PC-3 (cell line): ENCODE measurements at regions of chr11 and their contacts with region 1.

Region 1: DNA sequence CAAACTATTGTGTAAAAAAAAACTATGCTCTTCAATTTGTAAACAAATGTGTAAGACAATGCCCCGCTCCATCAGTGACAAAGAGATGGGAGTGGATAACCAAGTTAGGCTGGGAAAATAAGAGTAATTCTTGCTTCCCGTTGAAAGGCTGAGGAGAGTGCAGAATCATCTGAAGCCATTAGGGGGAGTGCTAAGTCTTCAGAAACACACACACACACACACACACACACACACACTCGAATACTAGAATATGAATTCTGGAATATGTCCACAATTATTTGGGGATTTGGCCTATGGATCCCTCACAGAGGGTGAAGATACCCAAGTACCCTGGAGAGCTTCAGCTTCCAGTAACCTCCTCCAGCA is 27.8 kb upstream of the ROBO3 start:
- DNase-seq: peak; percentile 93
- ATAC-seq: peak; percentile 21
- H3K4me3 ChIP-seq: peak overlapping the region; percentile 20
- H3K27ac ChIP-seq: no peak overlapping the region
- H3K4me1 ChIP-seq: peaks cover 58% of the 10 kb centered on the region
- H3K27me3 ChIP-seq: peaks cover 36% of the 10 kb centered on the region
- CTCF ChIP-seq: peak; percentile 69

Region 2: DNA sequence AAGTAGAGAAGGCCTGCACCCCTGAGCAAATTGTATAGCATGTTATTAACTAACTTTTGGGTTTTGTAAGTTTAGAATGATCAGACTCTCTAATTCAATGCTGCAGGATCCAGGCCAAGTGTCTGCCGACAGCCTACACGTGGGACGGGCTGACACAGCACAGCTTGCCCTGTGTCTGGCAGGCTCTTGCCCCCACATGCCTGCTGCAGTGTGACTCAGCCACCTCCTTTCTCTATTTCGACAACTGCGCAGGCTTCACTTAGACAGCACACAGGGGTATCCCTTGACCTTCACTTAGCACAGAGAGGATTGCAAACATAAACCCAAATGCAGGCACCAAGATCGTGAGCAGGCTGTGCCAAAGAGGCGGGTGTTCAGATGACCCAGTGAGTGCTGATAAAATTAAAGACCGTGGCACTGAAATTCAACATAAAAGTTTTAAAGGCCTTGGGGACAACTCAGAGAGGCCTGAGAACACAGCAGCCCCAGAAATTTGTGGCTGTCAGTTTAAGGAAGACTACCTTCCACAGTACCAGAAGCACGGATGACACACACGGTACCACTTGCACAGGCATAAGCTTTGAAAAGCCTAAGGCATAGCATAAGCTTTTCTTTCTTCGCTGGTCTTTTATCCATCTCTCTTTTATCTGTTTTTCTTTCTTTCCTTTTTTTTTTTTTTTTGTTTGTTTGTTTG is 1220.8 kb before region 1 on chr11:
- CTCF ChIA-PET with region 1: interaction called, 10 read pairs
- POLR2A ChIA-PET with region 1: no interaction called
- intact Hi-C with region 1: no loop called
- DNase-seq: no peak
- ATAC-seq: no peak
- H3K4me3 ChIP-seq: no peak overlapping the region
- H3K27ac ChIP-seq: no peak overlapping the region
- H3K4me1 ChIP-seq: no peaks in the 10 kb centered on the region
- H3K27me3 ChIP-seq: no peaks in the 10 kb centered on the region
- CTCF ChIP-seq: no peak

Region 3: GRCh38 chr11:124673333-124674167 is 163.9 kb before region 1 on chr11 and contains the starts of genes SIAE and SPA17:
- CTCF ChIA-PET with region 1: interaction called, 23 read pairs
- POLR2A ChIA-PET with region 1: interaction called, 17 read pairs
- intact Hi-C with region 1: loop called (anchors 1 kb)
- DNase-seq: peak; percentile 94
- ATAC-seq: peak; percentile 94
- H3K4me3 ChIP-seq: peak within 1 kb of the TSS; percentile 91
- H3K27ac ChIP-seq: peak within 1 kb of the TSS; percentile 46
- H3K4me1 ChIP-seq: peaks cover 16% of the 10 kb centered on the region
- H3K27me3 ChIP-seq: no peaks in the 10 kb centered on the region
- CTCF ChIP-seq: no peak
- total RNA-seq, gene SIAE: 12.8 and 17.6 TPM in 2 replicates
- total RNA-seq, gene SPA17: 14.0 and 16.5 TPM in 2 replicates

Region 4: GRCh38 chr11:124763156-124763947 is 74.1 kb before region 1 on chr11:
- CTCF ChIA-PET with region 1: interaction called, 50 read pairs
- POLR2A ChIA-PET with region 1: interaction called, 3 read pairs
- intact Hi-C with region 1: loop called (anchors 1 kb)
- DNase-seq: peak; percentile 90
- ATAC-seq: peak; percentile 63
- H3K4me3 ChIP-seq: peak overlapping the region; percentile 91
- H3K27ac ChIP-seq: no peak overlapping the region
- H3K4me1 ChIP-seq: peaks cover 22% of the 10 kb centered on the region
- H3K27me3 ChIP-seq: no peaks in the 10 kb centered on the region
- CTCF ChIP-seq: peak; percentile 89

Region 5: GRCh38 chr11:124793466-124794278 is 43.8 kb before region 1 on chr11:
- CTCF ChIA-PET with region 1: interaction called, 48 read pairs
- POLR2A ChIA-PET with region 1: no interaction called
- intact Hi-C with region 1: no loop called
- DNase-seq: peak; percentile 82
- ATAC-seq: peak; percentile 65
- H3K4me3 ChIP-seq: no peak overlapping the region
- H3K27ac ChIP-seq: no peak overlapping the region
- H3K4me1 ChIP-seq: peaks cover 42% of the 10 kb centered on the region
- H3K27me3 ChIP-seq: no peaks in the 10 kb centered on the region
- CTCF ChIP-seq: peak; percentile 88

Region 6: DNA sequence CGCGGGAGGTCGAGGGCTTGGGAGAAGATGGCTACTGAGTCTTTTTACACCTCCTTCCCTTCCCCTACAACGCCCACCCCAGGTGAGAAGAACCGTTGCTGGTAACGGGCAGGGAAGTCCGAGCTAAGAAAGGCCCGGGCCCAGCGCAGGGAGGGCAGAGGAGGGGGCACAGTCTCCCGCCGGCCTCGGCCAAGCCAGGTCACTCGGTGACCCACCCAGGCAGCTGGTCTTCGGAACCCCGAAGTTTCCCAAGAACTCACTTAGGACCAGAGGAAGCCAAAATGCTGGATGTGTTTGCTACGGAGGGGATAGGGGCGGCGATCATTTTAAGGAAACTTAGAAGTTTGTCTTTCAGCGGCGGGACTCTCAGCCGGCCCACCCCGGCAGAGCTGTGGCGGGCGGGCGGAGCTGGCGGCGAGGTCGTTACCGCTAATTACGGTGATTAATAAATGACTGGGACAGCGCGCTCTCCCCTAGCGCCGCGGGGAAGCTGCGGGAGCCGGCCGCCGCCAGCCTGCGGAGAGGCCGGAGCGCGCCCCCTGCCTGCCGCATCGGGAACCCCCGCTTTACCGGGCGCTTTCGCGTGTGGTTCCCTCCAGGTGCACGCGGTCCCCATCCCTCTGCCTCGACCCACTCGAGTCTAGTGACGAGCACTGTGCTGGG is 28.6 kb after region 1 on chr11:
- CTCF ChIA-PET with region 1: interaction called, 13 read pairs
- POLR2A ChIA-PET with region 1: no interaction called
- intact Hi-C with region 1: loop called (anchors 1 kb)
- DNase-seq: peak; percentile 30
- ATAC-seq: peak; percentile 17
- H3K4me3 ChIP-seq: peak overlapping the region; percentile 18; the same call in 1 of the 2 replicates
- H3K27ac ChIP-seq: no peak overlapping the region
- H3K4me1 ChIP-seq: no peaks in the 10 kb centered on the region
- H3K27me3 ChIP-seq: peaks cover 72% of the 10 kb centered on the region
- CTCF ChIP-seq: peak; percentile 74

Region 7: DNA sequence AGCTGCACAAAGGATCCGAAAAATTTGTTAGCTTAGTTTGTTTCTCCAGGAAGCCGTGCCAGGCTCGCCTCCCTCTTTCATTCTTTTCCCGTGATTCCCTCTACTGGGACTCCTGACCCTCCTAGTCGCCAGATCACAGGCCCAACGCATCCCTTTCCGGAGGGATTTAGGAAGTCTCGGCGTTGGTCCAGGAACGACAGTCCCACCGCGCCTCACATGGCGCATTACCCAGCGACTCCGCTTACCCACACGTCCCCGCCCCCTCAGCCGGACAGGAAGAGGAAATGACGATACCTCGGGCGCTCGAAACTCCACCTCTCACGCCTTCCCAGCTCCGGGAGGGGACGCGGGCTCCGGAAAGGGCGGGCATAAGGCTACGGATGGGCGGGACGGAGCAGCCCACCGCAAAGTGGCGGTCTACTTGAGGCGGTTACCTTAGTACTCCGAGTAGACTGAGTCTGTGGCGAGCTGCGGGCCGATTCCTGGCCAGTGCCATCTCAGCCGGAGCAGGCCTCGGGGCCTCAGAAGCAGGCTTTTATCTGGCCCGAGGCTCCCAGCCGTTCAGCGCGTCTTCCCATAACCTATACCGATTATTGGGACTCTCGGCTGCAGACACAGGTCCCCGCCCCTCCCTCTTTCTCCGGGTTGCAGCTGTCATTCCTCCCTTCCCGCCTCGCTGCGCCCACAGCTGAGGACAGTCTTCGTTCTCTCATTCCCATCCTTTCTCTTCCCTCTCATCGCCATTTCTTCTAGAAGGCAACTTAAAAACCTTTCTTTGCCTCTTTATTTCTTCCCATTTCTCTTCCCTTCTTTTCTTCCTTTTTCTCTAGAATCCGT is 116.5 kb after region 1 on chr11 and contains the start of gene CCDC15:
- CTCF ChIA-PET with region 1: interaction called, 4 read pairs
- POLR2A ChIA-PET with region 1: no interaction called
- intact Hi-C with region 1: loop called (anchors 1 kb)
- DNase-seq: peak; percentile 99
- ATAC-seq: peak; percentile 97
- H3K4me3 ChIP-seq: peak within 1 kb of the TSS; percentile 76
- H3K27ac ChIP-seq: peak within 1 kb of the TSS; percentile 70
- H3K4me1 ChIP-seq: peaks cover 24% of the 10 kb centered on the region
- H3K27me3 ChIP-seq: no peaks in the 10 kb centered on the region
- CTCF ChIP-seq: no peak
- total RNA-seq, gene CCDC15: 8.6 and 11.4 TPM in 2 replicates